Adrenal gland (tissue), 19 donors: ENCODE measurements at regions of chr10 and their contacts with region 1.

Region 1: GRCh38 chr10:35218339-35218955 is 91.8 kb downstream of the CREM start:
- DNase-seq: peak; percentile 84 to 97 (median 91)
- H3K4me3 ChIP-seq: no peak overlapping the region
- H3K27ac ChIP-seq: peak overlapping the region in 3 of 5 donors; percentile 14 to 67 (median 62)
- H3K4me1 ChIP-seq: peaks cover 0 to 31% of the 10 kb centered on the region in 2 donors
- H3K27me3 ChIP-seq: no peaks in the 10 kb centered on the region
- CTCF ChIP-seq: peak; percentile 83 to 95 (median 91)
- POLR2A ChIP-seq: no peak

Region 2: GRCh38 chr10:35119378-35119777 is 99.1 kb before region 1 on chr10:
- intact Hi-C with region 1: loop called (anchors 5 kb)
- DNase-seq: no peak
- H3K4me3 ChIP-seq: no peak overlapping the region
- H3K27ac ChIP-seq: no peak overlapping the region
- H3K4me1 ChIP-seq: no peaks in the 10 kb centered on the region
- H3K27me3 ChIP-seq: no peaks in the 10 kb centered on the region
- CTCF ChIP-seq: no peak
- POLR2A ChIP-seq: no peak

Region 3: DNA sequence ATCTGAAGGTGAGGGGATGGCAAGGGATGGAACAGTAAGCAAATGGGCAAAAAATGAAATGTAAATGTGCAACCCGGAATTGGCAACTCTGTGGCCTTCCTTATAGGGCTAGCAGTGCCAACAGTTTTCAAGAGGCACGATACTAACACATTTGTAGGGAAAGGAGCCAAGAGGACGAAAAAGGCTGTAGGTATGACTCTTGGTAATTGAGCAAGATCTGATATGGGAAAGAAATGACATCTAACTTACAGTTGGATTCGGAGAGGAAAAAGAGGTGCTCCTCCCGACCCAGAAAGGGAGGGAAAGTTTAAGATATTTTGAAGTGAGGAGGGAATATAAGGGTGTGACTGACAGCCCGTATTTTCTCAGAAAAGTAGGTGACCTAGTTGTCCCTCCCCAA is 93.9 kb before region 1 on chr10:
- intact Hi-C with region 1: loop called (anchors 5 kb)
- DNase-seq: peak in 1 of 7 donors; percentile 11
- H3K4me3 ChIP-seq: no peak overlapping the region
- H3K27ac ChIP-seq: no peak overlapping the region
- H3K4me1 ChIP-seq: peaks cover 6 to 23% of the 10 kb centered on the region in 2 donors
- H3K27me3 ChIP-seq: no peaks in the 10 kb centered on the region
- CTCF ChIP-seq: no peak
- POLR2A ChIP-seq: no peak